ENCODE measurements at regions of chr4 and their contacts with region 1.

Region 1: GRCh38 chr4:1746265-1746691 is 25.0 kb downstream of the TACC3 start:
- DNase-seq: no peak
- H3K4me3 ChIP-seq: no peak overlapping the region
- CTCF ChIP-seq: peak; percentile 98

Region 2: GRCh38 chr4:1759818-1760223 is 13.5 kb after region 1 on chr4:
- CTCF ChIA-PET with region 1: interaction called, 20 read pairs
- POLR2A ChIA-PET with region 1: no interaction called
- DNase-seq: no peak
- H3K4me3 ChIP-seq: no peak overlapping the region
- CTCF ChIP-seq: no peak

Region 3: GRCh38 chr4:2095789-2096570 is 349.7 kb after region 1 on chr4:
- CTCF ChIA-PET with region 1: no interaction called
- POLR2A ChIA-PET with region 1: no interaction called
- DNase-seq: no peak
- H3K4me3 ChIP-seq: no peak overlapping the region
- CTCF ChIP-seq: no peak